Caco-2 (cell line): ENCODE measurements at regions of chr9 and their contacts with region 1.

Region 1: GRCh38 chr9:38362852-38363593 is 29.5 kb upstream of the ALDH1B1 start:
- DNase-seq: peak; percentile 47 to 53
- H3K4me3 ChIP-seq: no peak overlapping the region
- H3K4me3 Mint-ChIP-seq: no peak overlapping the region
- H3K27ac Mint-ChIP-seq: no peak overlapping the region
- H3K4me1 ChIP-seq: no peaks in the 10 kb centered on the region
- H3K4me1 Mint-ChIP-seq: no peaks in the 10 kb centered on the region
- H3K27me3 ChIP-seq: no peaks in the 10 kb centered on the region
- H3K27me3 Mint-ChIP-seq: no peaks in the 10 kb centered on the region
- CTCF ChIP-seq: peak; percentile 49 to 61

Region 2: GRCh38 chr9:37903647-37904444 is 459.2 kb before region 1 on chr9 and contains the start of gene SLC25A51:
- CTCF ChIA-PET with region 1: no interaction called
- POLR2A ChIA-PET with region 1: no interaction called
- intact Hi-C with region 1: loop called (anchors 2 kb)
- DNase-seq: peak; percentile 97
- H3K4me3 ChIP-seq: peak within 1 kb of the TSS; percentile 81
- H3K4me3 Mint-ChIP-seq: peak within 1 kb of the TSS; percentile 77
- H3K27ac Mint-ChIP-seq: peak within 1 kb of the TSS; percentile 91
- H3K4me1 ChIP-seq: peaks cover 26% of the 10 kb centered on the region
- H3K4me1 Mint-ChIP-seq: peaks cover 20% of the 10 kb centered on the region
- H3K27me3 ChIP-seq: no peaks in the 10 kb centered on the region
- H3K27me3 Mint-ChIP-seq: no peaks in the 10 kb centered on the region
- CTCF ChIP-seq: peak; percentile 88 to 96
- total RNA-seq, gene SLC25A51: 29.1 and 29.3 TPM in 2 replicates

Region 3: DNA sequence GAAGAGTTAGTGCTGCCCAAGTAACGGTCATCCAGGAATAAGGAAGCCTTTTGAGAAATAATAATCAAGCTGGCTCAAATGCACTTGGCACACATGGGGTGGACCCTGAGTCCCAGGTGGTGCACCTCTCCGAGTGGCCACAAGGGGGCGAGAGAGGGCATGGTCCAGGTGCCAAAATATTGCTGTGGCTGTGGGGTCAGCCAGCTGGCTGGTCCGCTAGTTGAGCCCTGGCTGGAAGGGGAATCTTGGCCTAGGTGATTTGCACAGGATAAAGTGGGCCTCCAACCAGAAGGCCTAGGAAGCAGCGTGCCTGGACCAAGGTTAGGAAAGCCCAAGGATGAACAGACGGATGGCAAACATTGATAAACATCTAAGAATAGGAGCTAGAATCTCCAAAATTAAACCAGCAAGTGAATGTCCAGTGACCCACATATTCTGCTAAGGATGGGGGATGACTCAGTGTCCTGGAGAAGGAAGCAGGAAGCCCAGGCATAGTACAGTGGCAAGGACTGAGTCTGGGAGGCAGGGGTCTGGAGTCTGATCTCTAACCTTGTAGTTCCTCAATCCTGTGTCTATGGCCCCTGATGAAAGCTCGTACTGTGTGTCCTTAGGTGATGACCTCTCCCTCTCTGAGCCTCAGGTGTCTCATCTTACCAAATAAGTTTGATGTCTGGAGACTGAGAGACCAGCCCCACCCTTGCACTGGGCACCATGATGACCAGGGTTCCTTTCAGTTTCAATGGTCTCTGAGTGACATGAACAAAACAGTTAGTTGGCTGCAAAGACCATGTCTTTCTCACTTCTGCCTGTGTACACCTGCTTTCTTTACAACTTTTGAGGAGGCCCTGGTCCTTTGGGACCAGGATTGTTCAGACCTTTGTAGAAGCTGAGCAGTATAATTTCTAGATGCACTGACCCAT is 274.8 kb before region 1 on chr9:
- CTCF ChIA-PET with region 1: no interaction called
- POLR2A ChIA-PET with region 1: no interaction called
- intact Hi-C with region 1: loop called (anchors 1 kb)
- DNase-seq: peak; percentile 74 to 86
- H3K4me3 ChIP-seq: no peak overlapping the region
- H3K4me3 Mint-ChIP-seq: no peak overlapping the region
- H3K27ac Mint-ChIP-seq: no peak overlapping the region
- H3K4me1 ChIP-seq: no peaks in the 10 kb centered on the region
- H3K4me1 Mint-ChIP-seq: peaks cover 5% of the 10 kb centered on the region
- H3K27me3 ChIP-seq: no peaks in the 10 kb centered on the region
- H3K27me3 Mint-ChIP-seq: no peaks in the 10 kb centered on the region
- CTCF ChIP-seq: peak; percentile 92 to 93

Region 4: GRCh38 chr9:38277601-38278200 is 85.3 kb before region 1 on chr9:
- CTCF ChIA-PET with region 1: no interaction called
- POLR2A ChIA-PET with region 1: no interaction called
- intact Hi-C with region 1: loop called (anchors 10 kb)
- DNase-seq: no peak
- H3K4me3 ChIP-seq: no peak overlapping the region
- H3K4me3 Mint-ChIP-seq: no peak overlapping the region
- H3K27ac Mint-ChIP-seq: no peak overlapping the region
- H3K4me1 ChIP-seq: no peaks in the 10 kb centered on the region
- H3K4me1 Mint-ChIP-seq: no peaks in the 10 kb centered on the region
- H3K27me3 ChIP-seq: no peaks in the 10 kb centered on the region
- H3K27me3 Mint-ChIP-seq: peaks cover 11% of the 10 kb centered on the region
- CTCF ChIP-seq: no peak

Region 5: GRCh38 chr9:38343552-38343951 is 19.5 kb before region 1 on chr9:
- CTCF ChIA-PET with region 1: no interaction called
- POLR2A ChIA-PET with region 1: no interaction called
- intact Hi-C with region 1: loop called (anchors 1 kb)
- DNase-seq: no peak
- H3K4me3 ChIP-seq: no peak overlapping the region
- H3K4me3 Mint-ChIP-seq: no peak overlapping the region
- H3K27ac Mint-ChIP-seq: no peak overlapping the region
- H3K4me1 ChIP-seq: no peaks in the 10 kb centered on the region
- H3K4me1 Mint-ChIP-seq: no peaks in the 10 kb centered on the region
- H3K27me3 ChIP-seq: no peaks in the 10 kb centered on the region
- H3K27me3 Mint-ChIP-seq: peaks cover 17% of the 10 kb centered on the region
- CTCF ChIP-seq: no peak

Region 6: GRCh38 chr9:38380872-38381534 is 18.0 kb after region 1 on chr9:
- CTCF ChIA-PET with region 1: no interaction called
- POLR2A ChIA-PET with region 1: no interaction called
- intact Hi-C with region 1: no loop called
- DNase-seq: peak; percentile 81 to 90
- H3K4me3 ChIP-seq: no peak overlapping the region
- H3K4me3 Mint-ChIP-seq: peak overlapping the region; percentile 52
- H3K27ac Mint-ChIP-seq: peak overlapping the region; percentile 94
- H3K4me1 ChIP-seq: peaks cover 31% of the 10 kb centered on the region
- H3K4me1 Mint-ChIP-seq: peaks cover 13% of the 10 kb centered on the region
- H3K27me3 ChIP-seq: no peaks in the 10 kb centered on the region
- H3K27me3 Mint-ChIP-seq: no peaks in the 10 kb centered on the region
- CTCF ChIP-seq: no peak